AG04449 (cell line): ENCODE measurements at regions of chr9 and their contacts with region 1.

Region 1: GRCh38 chr9:132249123-132249522 is 87.3 kb downstream of the NTNG2 start:
- DNase-seq: no peak
- H3K4me3 ChIP-seq: no peak overlapping the region
- CTCF ChIP-seq: no peak

Region 2: DNA sequence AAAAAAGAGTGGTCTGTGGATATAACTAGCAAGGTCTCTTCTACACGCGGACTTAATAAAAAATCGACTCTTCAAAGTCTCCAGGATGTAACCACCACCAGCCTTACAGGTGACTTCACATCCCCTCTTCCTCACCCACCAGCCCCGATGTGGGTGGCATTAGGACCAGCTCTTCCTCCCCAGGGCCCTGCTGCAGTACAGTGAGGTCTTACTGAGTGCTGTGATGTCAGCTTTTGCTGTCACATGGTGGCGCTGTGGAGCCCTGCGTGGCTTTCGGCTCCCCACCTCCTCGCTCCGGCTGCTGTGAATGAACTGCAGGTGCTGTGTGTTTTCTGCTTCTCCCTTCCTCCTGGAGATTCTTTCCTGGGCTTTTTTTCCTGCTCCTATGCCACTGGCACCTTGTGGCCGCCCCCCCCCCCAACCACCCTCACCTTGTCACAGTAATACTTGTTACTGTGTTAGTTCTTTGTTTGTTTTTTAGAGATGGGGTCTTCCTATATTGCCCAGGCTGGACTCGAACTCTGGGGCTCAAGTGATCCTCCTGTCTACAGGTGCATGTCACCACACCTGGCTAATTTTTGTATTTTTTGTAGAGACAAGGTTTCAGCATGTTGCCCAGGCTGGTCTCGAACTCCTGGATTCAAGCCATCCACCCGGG is 493.5 kb before region 1 on chr9:
- CTCF ChIA-PET with region 1: interaction called, 370 read pairs
- POLR2A ChIA-PET with region 1: no interaction called
- DNase-seq: no peak
- H3K4me3 ChIP-seq: no peak overlapping the region
- CTCF ChIP-seq: peak; percentile 96

Region 3: DNA sequence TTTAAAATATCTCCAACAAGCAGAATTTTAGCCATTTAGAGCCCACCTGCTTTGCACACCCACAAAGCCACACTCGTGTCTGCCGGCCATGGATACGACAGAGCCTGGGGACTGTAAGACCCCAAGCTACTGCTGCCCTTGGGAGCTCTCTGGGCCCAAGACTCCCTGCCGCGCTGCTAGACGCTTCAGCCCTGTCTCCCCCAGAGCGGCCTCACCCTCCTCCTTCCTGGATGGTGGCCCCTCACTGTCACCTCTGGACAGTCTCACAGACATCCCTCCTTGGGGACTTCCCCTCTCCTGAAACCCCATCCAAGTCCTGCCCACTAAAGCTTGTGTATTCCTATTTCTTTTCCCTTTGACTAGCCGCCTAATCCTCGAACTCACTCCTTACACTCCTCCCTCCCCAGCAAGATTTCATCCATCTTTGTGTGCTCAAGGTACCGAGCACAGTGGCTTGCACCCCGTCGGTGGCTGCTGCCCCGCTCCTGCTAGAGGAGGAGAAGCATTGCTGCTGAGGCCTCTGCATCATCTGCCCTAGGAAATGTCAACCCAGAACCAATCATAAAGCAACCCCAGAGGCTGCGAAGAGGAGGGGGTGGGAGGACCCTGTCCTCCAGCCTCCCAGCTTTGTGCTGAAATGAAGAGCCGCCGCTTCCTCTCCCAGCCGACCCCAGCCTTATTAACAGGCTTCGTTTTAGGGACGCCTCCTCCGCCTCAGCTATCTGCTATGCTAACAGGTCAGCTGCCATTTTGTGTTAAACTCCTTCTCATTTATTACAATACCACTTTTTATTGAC is 232.1 kb after region 1 on chr9:
- CTCF ChIA-PET with region 1: no interaction called
- POLR2A ChIA-PET with region 1: no interaction called
- DNase-seq: no peak
- H3K4me3 ChIP-seq: no peak overlapping the region
- CTCF ChIP-seq: no peak